ENCODE measurements at regions of chr18 and their contacts with region 1.

Region 1: GRCh38 chr18:2655178-2655953 is at the start of gene SMCHD1:
- DNase-seq: peak; percentile 78
- ATAC-seq: peak; percentile 83
- H3K4me3 ChIP-seq: peak within 1 kb of the TSS; percentile 91
- H3K27ac ChIP-seq: peak within 1 kb of the TSS; percentile 84
- H3K4me1 ChIP-seq: peaks cover 6% of the 10 kb centered on the region
- H3K27me3 ChIP-seq: no peaks in the 10 kb centered on the region
- CTCF ChIP-seq: no peak
- POLR2A ChIP-seq: peak; percentile 87
- RAD21 ChIP-seq: no peak
- total RNA-seq, gene SMCHD1: 47.3 and 78.6 TPM in 2 replicates

Region 2: GRCh38 chr18:2571200-2572143 is 83.9 kb before region 1 on chr18 and contains the starts of genes METTL4 and NDC80:
- CTCF ChIA-PET with region 1: interaction called, 3 read pairs
- POLR2A ChIA-PET with region 1: no interaction called
- dilution Hi-C with region 1: no loop called
- in situ Hi-C with region 1: no loop called
- intact Hi-C with region 1: loop called (anchors 2 kb)
- DNase-seq: peak; percentile 86
- ATAC-seq: peak; percentile 87
- H3K4me3 ChIP-seq: peak within 1 kb of the TSS; percentile 66
- H3K27ac ChIP-seq: peak within 1 kb of the TSS; percentile 91
- H3K4me1 ChIP-seq: peaks cover 5% of the 10 kb centered on the region
- H3K27me3 ChIP-seq: no peaks in the 10 kb centered on the region
- CTCF ChIP-seq: no peak
- POLR2A ChIP-seq: peak; percentile 69
- RAD21 ChIP-seq: no peak
- total RNA-seq, gene METTL4: 5.4 and 6.7 TPM in 2 replicates
- total RNA-seq, gene NDC80: 11.8 and 15.3 TPM in 2 replicates

Region 3: DNA sequence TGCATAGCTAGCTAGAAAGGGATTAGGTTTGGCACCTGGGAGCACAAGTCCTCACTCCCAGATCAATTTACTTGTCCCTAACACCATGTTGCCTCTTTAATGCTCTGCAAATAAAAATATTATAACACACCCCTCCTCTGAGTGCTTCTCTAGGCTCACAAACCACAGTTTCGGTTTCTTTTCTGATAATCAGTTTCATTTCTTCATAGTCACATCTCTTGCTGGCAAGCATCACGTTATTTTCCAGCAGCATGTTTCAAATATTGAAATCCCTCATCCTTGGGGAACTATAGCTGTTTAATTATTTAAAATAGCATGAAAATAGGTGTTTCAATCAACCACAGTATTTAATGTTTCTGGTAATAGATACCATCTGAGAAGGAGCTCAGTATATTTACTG is 13.7 kb before region 1 on chr18:
- CTCF ChIA-PET with region 1: interaction called, 5 read pairs
- POLR2A ChIA-PET with region 1: interaction called, 4 read pairs
- dilution Hi-C with region 1: no loop called
- in situ Hi-C with region 1: no loop called
- intact Hi-C with region 1: loop called (anchors 2 kb)
- DNase-seq: peak; percentile 17
- ATAC-seq: no peak
- H3K4me3 ChIP-seq: no peak overlapping the region
- H3K27ac ChIP-seq: no peak overlapping the region
- H3K4me1 ChIP-seq: peaks cover 2% of the 10 kb centered on the region; the same call in 1 of the 2 replicates
- H3K27me3 ChIP-seq: no peaks in the 10 kb centered on the region
- CTCF ChIP-seq: no peak
- POLR2A ChIP-seq: no peak
- RAD21 ChIP-seq: no peak

Region 4: DNA sequence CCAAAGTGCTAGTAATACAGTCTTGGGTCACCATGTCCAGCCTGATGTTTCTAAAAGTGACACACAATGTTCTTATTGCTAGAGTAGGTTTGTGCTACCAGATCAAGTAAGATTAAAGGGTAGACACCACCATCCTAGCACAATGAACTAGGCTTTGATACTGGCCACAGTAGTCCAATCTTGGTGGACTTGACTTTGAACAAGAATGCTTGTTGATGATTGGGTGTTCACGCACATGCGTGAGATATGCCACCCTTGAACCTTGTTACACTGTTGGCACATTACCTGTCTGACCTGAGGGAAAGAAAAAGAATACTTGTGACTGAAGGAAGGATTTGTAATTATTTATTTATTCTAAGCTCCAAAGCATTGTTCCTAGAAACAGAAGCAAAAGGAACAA is 119.3 kb after region 1 on chr18:
- CTCF ChIA-PET with region 1: no interaction called
- POLR2A ChIA-PET with region 1: no interaction called
- dilution Hi-C with region 1: no loop called
- in situ Hi-C with region 1: no loop called
- intact Hi-C with region 1: loop called (anchors 5 kb)
- DNase-seq: no peak
- ATAC-seq: no peak
- H3K4me3 ChIP-seq: no peak overlapping the region
- H3K27ac ChIP-seq: no peak overlapping the region
- H3K4me1 ChIP-seq: no peaks in the 10 kb centered on the region
- H3K27me3 ChIP-seq: no peaks in the 10 kb centered on the region
- CTCF ChIP-seq: no peak
- POLR2A ChIP-seq: no peak
- RAD21 ChIP-seq: no peak

Measured in IMR-90 (cell line).